Calu3 (cell line): ENCODE measurements at regions of chr6 and their contacts with region 1.

Region 1: DNA sequence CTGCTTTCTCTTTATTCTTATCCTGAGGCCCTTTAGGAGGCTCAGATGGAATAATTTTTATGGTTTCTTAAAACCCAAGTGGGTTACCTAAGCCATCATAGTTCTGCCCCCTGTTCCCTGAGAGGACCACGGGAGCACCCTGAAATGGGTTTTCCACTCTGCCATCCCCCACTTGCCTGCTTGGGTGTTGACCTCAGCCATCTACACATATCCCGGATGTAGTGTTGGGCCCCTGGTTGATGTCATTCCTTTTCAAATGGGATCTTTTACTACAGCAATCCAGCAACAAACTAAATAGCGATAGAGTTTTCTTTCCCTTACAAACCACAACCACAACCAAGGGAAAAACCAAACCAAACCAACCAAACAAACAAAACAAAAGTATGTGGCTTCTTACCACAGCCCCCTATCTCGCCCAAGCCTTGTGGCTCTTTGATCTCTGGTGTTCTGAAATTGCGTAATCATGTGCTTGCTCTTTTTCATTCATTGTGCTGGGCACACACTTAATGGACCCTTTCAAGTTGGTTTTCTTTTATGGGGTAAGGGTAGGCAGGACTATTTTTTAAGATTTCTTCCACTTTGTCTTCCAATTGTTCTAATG is 154.9 kb downstream of the ESR1 start:
- DNase-seq: peak; percentile 6
- H3K4me3 Mint-ChIP-seq: no peak overlapping the region
- H3K27ac Mint-ChIP-seq: no peak overlapping the region
- H3K4me1 Mint-ChIP-seq: peaks cover 23% of the 10 kb centered on the region
- H3K27me3 Mint-ChIP-seq: no peaks in the 10 kb centered on the region
- CTCF ChIP-seq: no peak

Region 2: DNA sequence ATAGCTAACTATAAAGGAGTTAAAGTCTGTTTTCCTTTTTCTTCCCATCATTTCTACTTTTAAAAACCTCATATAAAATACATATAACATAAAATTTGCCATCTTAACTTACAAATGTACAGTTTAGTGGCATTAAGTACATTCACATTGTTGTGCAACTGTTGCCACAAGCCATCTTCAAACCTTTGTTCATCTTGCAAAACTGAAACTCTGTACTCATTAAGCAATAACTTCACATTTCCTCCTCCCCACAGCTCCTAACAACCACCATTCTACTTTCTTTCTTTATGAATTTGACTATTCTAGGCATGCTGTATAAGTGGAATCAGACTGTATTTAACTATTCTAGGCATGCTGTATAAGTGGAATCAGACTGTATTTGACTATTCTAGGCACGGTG is 464.0 kb before region 1 on chr6:
- CTCF ChIA-PET with region 1: no interaction called
- intact Hi-C with region 1: no loop called
- DNase-seq: no peak
- H3K4me3 Mint-ChIP-seq: no peak overlapping the region
- H3K27ac Mint-ChIP-seq: no peak overlapping the region
- H3K4me1 Mint-ChIP-seq: peaks cover 12% of the 10 kb centered on the region
- H3K27me3 Mint-ChIP-seq: no peaks in the 10 kb centered on the region
- CTCF ChIP-seq: no peak

Region 3: DNA sequence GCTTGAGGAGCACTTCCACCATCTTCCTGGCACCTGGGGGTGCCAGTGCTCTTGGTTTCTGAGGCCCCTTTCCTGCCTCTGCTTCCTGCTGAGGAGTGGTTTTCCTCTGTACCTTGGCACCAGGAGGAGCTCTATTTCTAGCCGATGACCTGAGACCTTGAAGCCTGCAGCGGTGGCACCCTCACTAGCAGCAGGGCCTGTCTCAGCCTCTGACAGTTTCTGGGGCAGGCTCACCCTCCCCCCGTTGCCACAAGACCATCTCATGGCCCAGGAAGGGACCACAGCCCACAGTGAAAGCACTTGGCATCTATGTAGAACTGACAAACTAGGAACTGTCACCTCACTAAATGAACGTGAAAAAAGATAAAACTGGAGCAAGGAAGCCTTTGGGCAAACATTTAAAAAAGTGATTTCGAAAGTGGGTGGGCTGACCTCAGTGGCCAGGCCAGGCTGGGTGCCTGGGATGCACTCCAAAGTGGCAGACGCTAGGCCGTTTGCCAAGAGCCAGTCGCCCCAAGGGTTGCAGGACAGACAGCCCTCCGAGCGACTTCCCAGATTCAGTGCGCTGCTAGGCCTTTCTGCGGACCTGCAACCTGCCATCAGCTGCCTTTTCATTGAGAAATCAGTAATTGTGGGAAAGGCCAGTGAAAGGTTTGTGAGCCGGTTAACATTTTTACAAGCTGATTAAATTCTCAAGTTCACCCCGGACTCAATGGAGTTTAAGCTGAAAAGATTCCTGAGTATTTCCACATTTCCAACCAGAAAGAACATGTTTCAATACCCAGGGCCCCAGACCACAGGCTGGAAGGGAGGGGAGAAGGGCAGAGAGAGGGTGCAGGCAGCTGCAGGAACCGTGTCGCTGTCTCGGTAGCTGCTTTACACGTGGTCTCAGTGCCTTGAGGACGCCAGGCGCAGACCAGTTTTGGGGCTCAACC is 148.8 kb after region 1 on chr6:
- CTCF ChIA-PET with region 1: no interaction called
- intact Hi-C with region 1: loop called (anchors 5 kb)
- DNase-seq: no peak
- H3K4me3 Mint-ChIP-seq: no peak overlapping the region
- H3K27ac Mint-ChIP-seq: no peak overlapping the region
- H3K4me1 Mint-ChIP-seq: peaks cover 8% of the 10 kb centered on the region
- H3K27me3 Mint-ChIP-seq: no peaks in the 10 kb centered on the region
- CTCF ChIP-seq: no peak